K562 (cell line): ENCODE measurements at regions of chr20 and their contacts with region 1.

Region 1: GRCh38 chr20:33686100-33686983 is at the start of gene E2F1:
- DNase-seq: peak; percentile 96 to 98 (median 96)
- ATAC-seq: peak; percentile 95
- H3K4me3 ChIP-seq: peak within 1 kb of the TSS; percentile 65
- H3K27ac ChIP-seq: peak within 1 kb of the TSS; percentile 76
- H3K4me1 ChIP-seq: peaks cover 40 to 63% of the 10 kb centered on the region in 2 experiments
- H3K27me3 ChIP-seq: no peaks in the 10 kb centered on the region
- CTCF ChIP-seq: peak; percentile 23 to 43 (median 38); a peak in 3 of 6 replicates
- EP300 ChIP-seq: no peak
- POLR2A ChIP-seq: no peak
- RAD21 ChIP-seq: peak in 1 of 2 experiments; percentile 14; a peak in 1 of 4 replicates
- polyA plus RNA-seq, gene E2F1: 0.14 to 0.39 TPM

Region 2: DNA sequence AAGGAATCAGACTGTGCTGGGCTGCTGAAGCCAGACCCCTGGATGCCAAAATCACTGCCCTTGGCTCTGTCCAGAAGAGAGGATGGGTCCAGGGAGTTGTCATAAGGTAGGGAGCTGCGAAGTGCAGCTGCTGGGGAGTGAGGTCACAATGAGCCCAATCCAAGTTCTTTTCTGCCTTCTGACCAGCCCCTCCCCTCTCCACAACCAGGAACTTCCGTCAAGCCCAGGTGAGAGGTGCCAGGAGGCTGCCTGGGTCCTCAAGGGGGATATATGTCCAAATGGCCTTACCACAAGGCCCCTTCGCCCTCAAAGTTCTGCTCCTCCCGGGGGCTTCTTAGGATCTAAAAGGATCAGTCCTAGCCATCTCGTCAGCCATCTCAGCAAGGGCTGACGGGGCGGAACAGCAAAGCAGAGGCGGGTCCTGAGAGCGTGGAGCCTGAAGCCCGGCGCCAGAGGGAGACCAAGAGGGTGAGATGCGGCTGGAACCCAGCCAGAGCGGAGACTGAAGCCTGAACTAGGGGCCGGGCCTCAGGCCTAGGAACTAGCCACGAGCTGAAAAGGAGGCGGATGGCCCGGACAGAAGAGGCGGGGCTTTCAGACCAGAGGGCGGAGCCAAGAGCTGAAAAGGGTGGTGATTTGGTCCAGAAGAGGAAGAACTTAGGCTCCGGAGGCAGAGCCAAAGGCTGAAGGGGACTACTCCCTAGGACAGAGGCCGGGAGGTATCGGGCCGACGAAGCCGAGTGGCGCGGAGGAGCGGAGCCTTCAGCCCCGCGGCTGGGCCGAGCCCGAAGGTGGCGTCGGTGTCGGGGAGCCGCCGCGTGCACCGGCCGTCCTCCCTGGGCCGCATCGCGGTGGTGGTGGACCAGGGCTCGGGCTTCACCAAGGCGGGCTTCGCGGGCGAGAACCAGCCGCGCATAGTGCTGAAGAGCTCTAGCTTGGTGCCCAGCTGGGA is 19.8 kb before region 1 on chr20 and contains the start of gene ACTL10:
- CTCF ChIA-PET with region 1: no interaction called
- POLR2A ChIA-PET with region 1: interaction called, 17 read pairs
- in situ Hi-C with region 1: no loop called
- intact Hi-C with region 1: no loop called
- DNase-seq: peak; percentile 82 to 98 (median 88)
- ATAC-seq: peak; percentile 89
- H3K4me3 ChIP-seq: no peak within 1 kb of the TSS
- H3K27ac ChIP-seq: peak within 1 kb of the TSS; percentile 41; the same call in 2 of the 3 replicates
- H3K4me1 ChIP-seq: peaks cover 21 to 63% of the 10 kb centered on the region in 2 experiments; a peak in 4 of 5 replicates
- H3K27me3 ChIP-seq: no peaks in the 10 kb centered on the region
- CTCF ChIP-seq: peak; percentile 56 to 67 (median 61); a peak in 5 of 6 replicates
- EP300 ChIP-seq: peak; percentile 12; the same call in 1 of the 2 replicates
- POLR2A ChIP-seq: peak; percentile 47; the same call in 1 of the 2 replicates
- RAD21 ChIP-seq: peak; percentile 48 to 56
- polyA plus RNA-seq, gene ACTL10: not detected

Region 3: GRCh38 chr20:33674295-33675135 is 11.8 kb before region 1 on chr20 and contains the start of gene NECAB3:
- CTCF ChIA-PET with region 1: no interaction called
- POLR2A ChIA-PET with region 1: interaction called, 15 read pairs
- in situ Hi-C with region 1: no loop called
- intact Hi-C with region 1: no loop called
- DNase-seq: peak; percentile 90 to 93 (median 92)
- ATAC-seq: peak; percentile 88
- H3K4me3 ChIP-seq: peak within 1 kb of the TSS; percentile 86
- H3K27ac ChIP-seq: peak within 1 kb of the TSS; percentile 88
- H3K4me1 ChIP-seq: peaks cover 17 to 52% of the 10 kb centered on the region in 2 experiments
- H3K27me3 ChIP-seq: no peaks in the 10 kb centered on the region
- CTCF ChIP-seq: no peak
- EP300 ChIP-seq: no peak
- POLR2A ChIP-seq: no peak; the same call in 1 of the 2 replicates
- RAD21 ChIP-seq: no peak; a peak in 1 of 4 replicates
- polyA plus RNA-seq, gene NECAB3: 0.94 to 1.9 TPM

Region 4: DNA sequence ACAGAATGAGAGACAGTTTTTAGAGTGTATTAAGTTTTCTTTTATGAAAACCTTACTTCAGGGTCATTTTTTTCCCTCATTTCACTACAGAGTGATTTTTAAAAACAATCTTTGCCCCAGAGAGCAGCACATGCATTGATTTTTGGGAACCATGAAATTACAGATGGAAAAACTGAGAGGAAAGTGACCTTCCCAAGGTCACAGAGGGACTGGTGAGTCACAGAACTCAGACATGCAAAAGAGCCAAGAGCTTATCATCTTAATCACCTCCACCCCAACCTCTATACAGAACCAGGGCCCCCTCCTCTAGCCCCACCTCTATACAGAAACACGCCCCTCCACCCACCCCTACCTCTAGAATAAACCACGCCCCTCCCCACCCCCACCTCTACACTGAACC is 23.1 kb after region 1 on chr20:
- CTCF ChIA-PET with region 1: no interaction called
- POLR2A ChIA-PET with region 1: interaction called, 4 read pairs
- in situ Hi-C with region 1: no loop called
- intact Hi-C with region 1: loop called (anchors 1 kb)
- DNase-seq: peak; percentile 88 to 94 (median 88)
- ATAC-seq: peak; percentile 84
- H3K4me3 ChIP-seq: peak overlapping the region; percentile 25; the same call in 1 of the 2 replicates
- H3K27ac ChIP-seq: peak overlapping the region; percentile 87
- H3K4me1 ChIP-seq: peaks cover 19 to 27% of the 10 kb centered on the region in 2 experiments
- H3K27me3 ChIP-seq: no peaks in the 10 kb centered on the region
- CTCF ChIP-seq: no peak
- EP300 ChIP-seq: no peak
- POLR2A ChIP-seq: 0 out of 2 replicates have a peak, but pooled peaks have one; percentile 6
- RAD21 ChIP-seq: no peak

Region 5: GRCh38 chr20:33731693-33732165 is 45.4 kb after region 1 on chr20 and contains the start of gene ZNF341:
- CTCF ChIA-PET with region 1: interaction called, 4 read pairs
- POLR2A ChIA-PET with region 1: interaction called, 10 read pairs
- in situ Hi-C with region 1: no loop called
- intact Hi-C with region 1: loop called (anchors 5 kb)
- DNase-seq: peak; percentile 82 to 94 (median 89)
- ATAC-seq: peak; percentile 94
- H3K4me3 ChIP-seq: peak within 1 kb of the TSS; percentile 49
- H3K27ac ChIP-seq: peak within 1 kb of the TSS; percentile 75
- H3K4me1 ChIP-seq: peaks cover 20 to 33% of the 10 kb centered on the region in 2 experiments
- H3K27me3 ChIP-seq: no peaks in the 10 kb centered on the region
- CTCF ChIP-seq: peak; percentile 82 to 93 (median 89)
- EP300 ChIP-seq: no peak
- POLR2A ChIP-seq: no peak
- RAD21 ChIP-seq: peak; percentile 86 to 89
- polyA plus RNA-seq, gene ZNF341: 0.08 to 0.10 TPM

Region 6: DNA sequence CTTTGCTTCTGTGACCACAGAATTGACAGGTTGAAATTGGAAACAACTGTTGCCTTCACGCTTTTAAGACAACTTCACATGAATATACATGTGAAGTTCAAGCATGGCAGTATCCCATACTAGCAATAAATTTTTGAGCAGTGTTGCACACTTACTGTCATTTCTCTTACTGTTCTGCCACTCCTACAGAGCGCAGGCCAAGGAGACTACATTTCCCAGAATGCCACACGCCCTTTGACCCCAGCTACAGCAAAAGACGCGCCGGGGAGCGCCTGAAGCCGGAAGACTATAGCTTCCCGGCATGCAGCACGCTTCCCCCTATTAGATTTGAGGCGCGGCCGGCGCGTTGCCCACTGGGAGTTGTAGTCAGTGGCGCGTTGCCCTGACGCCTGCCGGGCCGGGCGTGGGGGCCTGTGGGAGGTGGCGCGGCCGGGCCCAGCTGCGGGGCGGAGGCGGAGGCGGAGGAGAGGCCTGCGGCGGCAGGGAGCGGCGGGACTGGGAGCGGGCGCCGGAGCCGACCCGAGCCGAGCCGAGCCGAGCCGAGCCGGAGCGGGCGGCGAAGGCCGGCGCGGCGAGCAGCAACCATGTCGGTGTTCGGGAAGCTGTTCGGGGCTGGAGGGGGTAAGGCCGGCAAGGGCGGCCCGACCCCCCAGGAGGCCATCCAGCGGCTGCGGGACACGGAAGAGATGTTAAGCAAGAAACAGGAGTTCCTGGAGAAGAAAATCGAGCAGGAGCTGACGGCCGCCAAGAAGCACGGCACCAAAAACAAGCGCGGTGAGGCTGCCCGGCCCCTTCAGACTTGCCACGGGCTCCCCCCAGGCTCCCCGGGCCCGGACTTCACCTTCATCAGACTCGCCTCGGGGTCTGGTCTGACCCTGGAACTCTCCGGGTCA is 124.8 kb after region 1 on chr20 and contains the start of gene CHMP4B:
- CTCF ChIA-PET with region 1: no interaction called
- POLR2A ChIA-PET with region 1: interaction called, 4 read pairs
- in situ Hi-C with region 1: no loop called
- intact Hi-C with region 1: loop called (anchors 5 kb)
- DNase-seq: peak; percentile 96 to 99 (median 96)
- ATAC-seq: peak; percentile 98
- H3K4me3 ChIP-seq: peak within 1 kb of the TSS; percentile 92
- H3K27ac ChIP-seq: peak within 1 kb of the TSS; percentile 84
- H3K4me1 ChIP-seq: peaks cover 7 to 22% of the 10 kb centered on the region in 2 experiments
- H3K27me3 ChIP-seq: no peaks in the 10 kb centered on the region
- CTCF ChIP-seq: peak in 1 of 3 experiments; percentile 8; a peak in 1 of 6 replicates
- EP300 ChIP-seq: peak; percentile 33; the same call in 1 of the 2 replicates
- POLR2A ChIP-seq: no peak
- RAD21 ChIP-seq: no peak
- polyA plus RNA-seq, gene CHMP4B: 1.8 to 2.5 TPM